ENCODE measurements at regions of chr17 and their contacts with region 1.

Region 1: GRCh38 chr17:50626037-50626574 is 8.6 kb upstream of the ABCC3 start:
- DNase-seq: peak; percentile 79
- CTCF ChIP-seq: peak; percentile 73

Region 2: GRCh38 chr17:50547035-50547735 is 78.9 kb before region 1 on chr17 and contains the start of gene SPATA20:
- CTCF ChIA-PET with region 1: interaction called, 10 read pairs
- POLR2A ChIA-PET with region 1: no interaction called
- DNase-seq: peak; percentile 92
- CTCF ChIP-seq: peak; percentile 98

Region 3: DNA sequence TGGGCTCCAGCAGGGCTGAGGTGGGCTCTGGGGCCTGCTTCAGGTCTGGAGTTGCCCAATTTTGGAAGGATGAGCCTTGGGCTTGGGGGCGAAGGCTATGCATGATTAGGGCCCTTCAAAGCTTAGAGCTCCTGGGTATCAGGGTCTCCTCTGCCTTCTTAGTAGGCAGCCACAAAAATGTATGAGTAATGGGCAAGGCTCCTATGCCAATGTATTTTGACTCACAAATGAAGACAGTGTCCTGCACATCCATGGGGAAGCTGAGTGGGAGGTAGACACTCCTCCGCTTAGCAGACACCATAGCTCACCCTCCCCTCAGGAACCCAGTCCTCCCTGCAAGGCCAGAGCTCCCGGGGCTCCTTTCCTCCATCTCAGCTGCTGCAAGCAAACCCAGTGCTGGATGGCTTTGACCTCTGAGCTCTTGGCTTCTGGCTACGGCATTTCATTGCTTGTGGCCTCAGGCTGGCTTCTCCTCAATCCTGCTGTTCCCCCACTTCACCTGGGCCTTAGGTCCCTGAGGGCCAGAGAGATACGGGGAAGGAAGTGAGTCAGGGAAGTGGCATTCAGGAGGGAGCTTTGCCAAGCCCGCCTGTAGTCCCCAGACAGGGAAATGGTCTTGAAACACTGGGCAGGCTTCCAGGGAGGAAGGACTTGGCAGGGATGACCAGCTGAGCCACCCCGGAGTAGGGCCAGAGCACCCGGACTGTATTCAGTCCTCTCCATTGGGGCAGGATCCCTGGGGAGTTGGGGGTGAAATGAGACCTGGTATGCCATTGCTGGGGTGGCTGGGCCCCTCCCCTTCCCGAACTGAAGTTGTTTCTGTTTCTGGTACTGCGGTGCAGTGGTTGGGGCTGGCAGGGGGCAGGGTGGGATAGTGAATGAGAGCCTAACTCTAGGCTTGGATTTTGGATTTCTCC is 13.0 kb after region 1 on chr17:
- CTCF ChIA-PET with region 1: interaction called, 29 read pairs
- POLR2A ChIA-PET with region 1: no interaction called
- DNase-seq: no peak
- CTCF ChIP-seq: no peak

Region 4: DNA sequence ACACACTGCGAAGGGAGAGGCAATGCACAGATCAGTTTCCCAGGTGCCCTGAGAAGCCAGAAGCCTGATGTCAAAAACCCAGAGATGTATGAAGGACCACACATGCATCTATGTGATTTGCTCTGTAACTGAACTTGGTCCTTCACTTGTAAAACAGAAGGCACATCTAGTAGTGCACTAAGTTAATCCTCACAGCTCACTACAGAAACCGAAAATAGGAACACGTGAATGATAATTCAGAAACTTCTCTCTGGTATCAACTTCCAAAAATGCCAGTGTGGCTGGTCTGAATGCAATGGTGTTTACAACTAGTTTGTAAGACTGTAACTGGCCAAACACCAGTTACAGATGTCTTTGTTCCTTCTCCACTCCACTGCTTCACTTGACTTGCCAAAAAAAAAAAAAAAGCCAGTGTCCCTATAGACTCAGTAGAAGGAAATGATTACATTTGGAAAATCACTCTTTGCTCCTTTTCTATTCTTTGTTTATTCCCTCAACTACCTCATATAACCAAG is 70.3 kb after region 1 on chr17:
- CTCF ChIA-PET with region 1: interaction called, 13 read pairs
- POLR2A ChIA-PET with region 1: no interaction called
- DNase-seq: no peak
- CTCF ChIP-seq: no peak